Naive thymus-derived CD4-positive, alpha-beta T cell (primary cell): ENCODE measurements at regions of chr3 and their contacts with region 1.

Region 1: GRCh38 chr3:143119009-143119914 is at the start of gene CHST2:
- DNase-seq: peak; percentile 60 to 78 (median 74)
- ATAC-seq: peak; percentile 85
- H3K4me3 ChIP-seq: peak within 1 kb of the TSS; percentile 95
- H3K4me3 Mint-ChIP-seq: peak within 1 kb of the TSS; percentile 90 to 97 (median 94)
- H3K27ac ChIP-seq: peak within 1 kb of the TSS; percentile 76
- H3K27ac Mint-ChIP-seq: peak within 1 kb of the TSS; percentile 81 to 93 (median 87)
- H3K4me1 ChIP-seq: peaks cover 0 to 29% of the 10 kb centered on the region in 2 donors
- H3K4me1 Mint-ChIP-seq: peaks cover 21 to 54% (median 45%) of the 10 kb centered on the region in 7 donors
- H3K27me3 ChIP-seq: no peaks in the 10 kb centered on the region
- H3K27me3 Mint-ChIP-seq: peaks cover 0 to 19% (median 0%) of the 10 kb centered on the region in 5 donors
- total RNA-seq, gene CHST2: 3.4 to 12.3 (median 4.5) TPM

Region 2: GRCh38 chr3:142578327-142579223 is 540.7 kb before region 1 on chr3 and contains the start of gene ATR:
- CTCF ChIA-PET with region 1: no interaction called
- POLR2A ChIA-PET with region 1: no interaction called
- intact Hi-C with region 1: loop called in 1 of 2 experiments (anchors 5 kb)
- DNase-seq: peak; percentile 89 to 96 (median 95)
- ATAC-seq: peak; percentile 96
- H3K4me3 ChIP-seq: peak within 1 kb of the TSS; percentile 97
- H3K4me3 Mint-ChIP-seq: peak within 1 kb of the TSS; percentile 93 to 99 (median 97)
- H3K27ac ChIP-seq: peak within 1 kb of the TSS; percentile 94
- H3K27ac Mint-ChIP-seq: peak within 1 kb of the TSS; percentile 96 to 99 (median 98)
- H3K4me1 ChIP-seq: peaks cover 25 to 26% of the 10 kb centered on the region in 2 donors
- H3K4me1 Mint-ChIP-seq: peaks cover 45 to 60% (median 54%) of the 10 kb centered on the region in 7 donors
- H3K27me3 ChIP-seq: no peaks in the 10 kb centered on the region
- H3K27me3 Mint-ChIP-seq: peaks cover 0 to 20% (median 0%) of the 10 kb centered on the region in 5 donors
- total RNA-seq, gene ATR: 31.3 to 48.3 (median 36.2) TPM

Region 3: DNA sequence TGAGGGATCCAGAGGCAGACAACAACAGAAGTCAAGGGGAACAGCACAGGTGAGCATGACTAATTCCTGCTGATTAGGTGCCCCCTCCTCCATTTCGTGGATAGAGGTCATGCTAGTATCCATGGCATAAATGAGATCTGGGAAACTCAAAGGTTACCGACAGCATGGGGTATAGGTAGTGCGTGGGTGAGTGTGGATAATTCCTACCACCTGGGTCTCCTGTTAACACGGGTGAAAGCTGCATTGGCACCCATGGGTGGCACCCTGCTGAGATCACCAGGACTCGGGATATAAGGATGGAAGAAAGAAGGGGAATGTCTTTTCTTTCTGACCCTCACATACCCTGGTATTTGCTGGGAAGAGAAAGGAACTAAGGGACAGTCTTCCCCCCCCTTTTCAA is 14.1 kb before region 1 on chr3:
- CTCF ChIA-PET with region 1: no interaction called
- POLR2A ChIA-PET with region 1: no interaction called
- intact Hi-C with region 1: no loop called
- DNase-seq: no peak
- ATAC-seq: no peak
- H3K4me3 ChIP-seq: no peak overlapping the region
- H3K4me3 Mint-ChIP-seq: no peak overlapping the region
- H3K27ac ChIP-seq: no peak overlapping the region
- H3K27ac Mint-ChIP-seq: no peak overlapping the region
- H3K4me1 ChIP-seq: no peaks in the 10 kb centered on the region
- H3K4me1 Mint-ChIP-seq: no peaks in the 10 kb centered on the region
- H3K27me3 ChIP-seq: no peaks in the 10 kb centered on the region
- H3K27me3 Mint-ChIP-seq: no peaks in the 10 kb centered on the region

Region 4: GRCh38 chr3:143171141-143171970 is 52.1 kb after region 1 on chr3:
- CTCF ChIA-PET with region 1: interaction called, 5 read pairs
- POLR2A ChIA-PET with region 1: interaction called, 12 read pairs
- intact Hi-C with region 1: loop called (anchors 1 kb)
- DNase-seq: peak in 6 of 9 donors; percentile 27 to 61 (median 55)
- ATAC-seq: peak; percentile 78
- H3K4me3 ChIP-seq: peak overlapping the region; percentile 24
- H3K4me3 Mint-ChIP-seq: peak overlapping the region; percentile 39 to 86 (median 82)
- H3K27ac ChIP-seq: peak overlapping the region; percentile 61
- H3K27ac Mint-ChIP-seq: peak overlapping the region; percentile 87 to 96 (median 92)
- H3K4me1 ChIP-seq: peaks cover 17 to 59% of the 10 kb centered on the region in 2 donors
- H3K4me1 Mint-ChIP-seq: peaks cover 58 to 91% (median 82%) of the 10 kb centered on the region in 7 donors
- H3K27me3 ChIP-seq: no peaks in the 10 kb centered on the region
- H3K27me3 Mint-ChIP-seq: no peaks in the 10 kb centered on the region

Region 5: DNA sequence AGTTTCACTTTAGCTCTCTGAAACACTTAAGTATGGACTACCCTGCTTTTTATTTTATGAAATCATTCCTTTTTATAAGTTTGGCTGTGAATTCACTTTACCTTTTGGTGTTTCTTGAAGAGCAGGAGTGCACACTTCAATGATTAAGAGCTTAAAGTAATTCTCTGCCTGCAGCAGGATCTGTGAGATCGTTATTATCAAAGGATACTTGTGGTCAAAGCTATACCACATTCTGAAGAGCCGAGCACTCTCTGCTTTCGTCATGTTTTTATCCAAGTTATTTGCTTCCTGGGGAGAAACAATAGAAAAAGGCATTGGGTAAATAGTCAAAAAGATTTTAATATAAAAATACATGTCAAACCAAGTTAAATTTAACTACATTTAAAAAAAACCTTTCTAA is 244.0 kb after region 1 on chr3:
- CTCF ChIA-PET with region 1: no interaction called
- POLR2A ChIA-PET with region 1: no interaction called
- intact Hi-C with region 1: loop called in 1 of 2 experiments (anchors 5 kb)
- DNase-seq: peak in 6 of 9 donors; percentile 12 to 51 (median 43)
- ATAC-seq: peak; percentile 59
- H3K4me3 ChIP-seq: no peak overlapping the region
- H3K4me3 Mint-ChIP-seq: peak overlapping the region; percentile 22 to 75 (median 53)
- H3K27ac ChIP-seq: peak overlapping the region; percentile 4
- H3K27ac Mint-ChIP-seq: peak overlapping the region in 8 of 9 donors; percentile 54 to 93 (median 85)
- H3K4me1 ChIP-seq: peaks cover 0 to 15% of the 10 kb centered on the region in 2 donors
- H3K4me1 Mint-ChIP-seq: peaks cover 18 to 41% (median 35%) of the 10 kb centered on the region in 7 donors
- H3K27me3 ChIP-seq: no peaks in the 10 kb centered on the region
- H3K27me3 Mint-ChIP-seq: no peaks in the 10 kb centered on the region

Region 6: GRCh38 chr3:143674100-143674968 is 555.1 kb after region 1 on chr3:
- CTCF ChIA-PET with region 1: interaction called, 4 read pairs
- POLR2A ChIA-PET with region 1: no interaction called
- intact Hi-C with region 1: loop called in 1 of 2 experiments (anchors 1 kb)
- DNase-seq: peak; percentile 40 to 86 (median 73)
- ATAC-seq: peak; percentile 96
- H3K4me3 ChIP-seq: no peak overlapping the region
- H3K4me3 Mint-ChIP-seq: peak overlapping the region in 9 of 10 donors; percentile 7 to 73 (median 45)
- H3K27ac ChIP-seq: no peak overlapping the region
- H3K27ac Mint-ChIP-seq: peak overlapping the region in 6 of 9 donors; percentile 14 to 86 (median 57)
- H3K4me1 ChIP-seq: peaks cover 0 to 6% of the 10 kb centered on the region in 2 donors
- H3K4me1 Mint-ChIP-seq: peaks cover 7 to 17% (median 9%) of the 10 kb centered on the region in 7 donors
- H3K27me3 ChIP-seq: no peaks in the 10 kb centered on the region
- H3K27me3 Mint-ChIP-seq: no peaks in the 10 kb centered on the region

Region 7: DNA sequence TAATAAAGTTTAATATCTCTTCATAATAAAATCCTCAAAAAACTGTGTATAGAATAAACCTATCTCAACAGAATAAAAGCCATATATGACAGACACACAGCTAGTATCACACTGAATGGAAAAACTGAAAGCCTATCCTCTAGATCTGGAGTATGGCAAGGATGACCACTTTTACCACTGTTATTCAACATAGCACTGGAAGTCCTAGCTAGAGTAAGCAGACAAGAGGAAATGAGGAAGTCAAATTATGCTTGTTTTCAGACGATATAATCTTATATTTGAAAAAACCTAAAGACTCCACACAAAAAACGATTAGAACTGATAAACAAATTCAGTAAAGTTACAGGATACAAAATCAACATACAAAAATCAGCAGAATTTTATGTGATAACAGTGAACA is 795.0 kb after region 1 on chr3:
- CTCF ChIA-PET with region 1: no interaction called
- POLR2A ChIA-PET with region 1: no interaction called
- intact Hi-C with region 1: no loop called
- DNase-seq: no peak
- ATAC-seq: no peak
- H3K4me3 ChIP-seq: no peak overlapping the region
- H3K4me3 Mint-ChIP-seq: no peak overlapping the region
- H3K27ac ChIP-seq: no peak overlapping the region
- H3K27ac Mint-ChIP-seq: no peak overlapping the region
- H3K4me1 ChIP-seq: no peaks in the 10 kb centered on the region
- H3K4me1 Mint-ChIP-seq: no peaks in the 10 kb centered on the region
- H3K27me3 ChIP-seq: no peaks in the 10 kb centered on the region
- H3K27me3 Mint-ChIP-seq: peaks cover 11 to 39% (median 19%) of the 10 kb centered on the region in 5 donors

Region 8: DNA sequence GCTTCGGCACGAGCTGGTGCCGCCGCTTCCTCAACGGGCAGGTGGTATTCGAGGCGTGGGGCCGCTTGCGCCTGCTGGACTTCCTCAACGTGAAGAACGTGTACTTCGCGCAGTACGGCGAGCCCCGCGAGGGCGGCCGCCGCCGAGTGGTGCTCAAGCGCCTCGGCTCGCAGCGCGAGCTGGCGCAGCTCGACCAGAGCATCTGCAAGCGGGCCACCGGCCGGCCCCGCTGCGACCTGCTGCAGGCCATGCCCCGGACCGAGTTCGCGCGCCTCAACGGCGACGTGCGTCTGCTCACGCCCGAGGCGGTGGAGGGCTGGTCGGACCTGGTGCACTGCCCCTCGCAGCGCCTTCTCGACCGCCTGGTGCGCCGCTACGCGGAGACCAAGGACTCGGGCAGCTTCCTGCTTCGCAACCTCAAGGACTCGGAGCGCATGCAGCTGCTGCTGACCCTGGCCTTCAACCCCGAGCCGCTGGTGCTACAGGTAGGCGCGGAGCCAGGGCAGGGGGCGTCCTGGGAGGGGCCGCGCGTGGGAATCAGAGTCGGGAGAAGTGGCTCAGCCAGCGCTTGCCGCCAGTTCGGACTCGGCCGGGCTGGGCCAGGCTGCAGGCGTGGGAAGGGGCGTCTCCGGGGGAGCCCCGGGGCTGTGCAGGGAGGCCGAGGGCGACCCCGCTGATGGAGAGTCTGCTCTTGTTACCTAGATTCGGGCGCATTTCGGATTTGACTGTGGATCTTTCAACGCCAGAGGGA is 853.4 kb after region 1 on chr3:
- CTCF ChIA-PET with region 1: no interaction called
- POLR2A ChIA-PET with region 1: interaction called, 7 read pairs
- intact Hi-C with region 1: loop called (anchors 1 to 5 kb)
- DNase-seq: peak in 8 of 9 donors; percentile 29 to 78 (median 61)
- ATAC-seq: peak; percentile 14
- H3K4me3 ChIP-seq: peak overlapping the region; percentile 61
- H3K4me3 Mint-ChIP-seq: peak overlapping the region; percentile 91 to 100 (median 97)
- H3K27ac ChIP-seq: peak overlapping the region; percentile 84
- H3K27ac Mint-ChIP-seq: peak overlapping the region; percentile 87 to 99 (median 97)
- H3K4me1 ChIP-seq: peaks cover 10 to 14% of the 10 kb centered on the region in 2 donors
- H3K4me1 Mint-ChIP-seq: peaks cover 25 to 46% (median 33%) of the 10 kb centered on the region in 7 donors
- H3K27me3 ChIP-seq: no peaks in the 10 kb centered on the region
- H3K27me3 Mint-ChIP-seq: peaks cover 0 to 22% (median 0%) of the 10 kb centered on the region in 5 donors